ENCODE measurements at regions of chr12 and their contacts with region 1.

Region 1: GRCh38 chr12:120265473-120266179 is at the start of gene PXN:
- DNase-seq: peak; percentile 88
- ATAC-seq: peak; percentile 84
- H3K4me3 Mint-ChIP-seq: peak within 1 kb of the TSS; percentile 83
- H3K27ac Mint-ChIP-seq: peak within 1 kb of the TSS; percentile 85
- H3K4me1 Mint-ChIP-seq: peaks cover 49% of the 10 kb centered on the region
- H3K27me3 Mint-ChIP-seq: no peaks in the 10 kb centered on the region
- CTCF ChIP-seq: peak; percentile 78
- total RNA-seq, gene PXN: 96.6 to 132 TPM (median 99.2 TPM) in 3 replicates

Region 2: GRCh38 chr12:120199595-120200306 is 65.9 kb before region 1 on chr12:
- CTCF ChIA-PET with region 1: interaction called, 48 read pairs
- POLR2A ChIA-PET with region 1: interaction called, 19 read pairs
- DNase-seq: no peak
- ATAC-seq: no peak
- H3K4me3 Mint-ChIP-seq: peak overlapping the region; percentile 97
- H3K27ac Mint-ChIP-seq: peak overlapping the region; percentile 99
- H3K4me1 Mint-ChIP-seq: peaks cover 27% of the 10 kb centered on the region
- H3K27me3 Mint-ChIP-seq: no peaks in the 10 kb centered on the region
- CTCF ChIP-seq: no peak

Region 3: DNA sequence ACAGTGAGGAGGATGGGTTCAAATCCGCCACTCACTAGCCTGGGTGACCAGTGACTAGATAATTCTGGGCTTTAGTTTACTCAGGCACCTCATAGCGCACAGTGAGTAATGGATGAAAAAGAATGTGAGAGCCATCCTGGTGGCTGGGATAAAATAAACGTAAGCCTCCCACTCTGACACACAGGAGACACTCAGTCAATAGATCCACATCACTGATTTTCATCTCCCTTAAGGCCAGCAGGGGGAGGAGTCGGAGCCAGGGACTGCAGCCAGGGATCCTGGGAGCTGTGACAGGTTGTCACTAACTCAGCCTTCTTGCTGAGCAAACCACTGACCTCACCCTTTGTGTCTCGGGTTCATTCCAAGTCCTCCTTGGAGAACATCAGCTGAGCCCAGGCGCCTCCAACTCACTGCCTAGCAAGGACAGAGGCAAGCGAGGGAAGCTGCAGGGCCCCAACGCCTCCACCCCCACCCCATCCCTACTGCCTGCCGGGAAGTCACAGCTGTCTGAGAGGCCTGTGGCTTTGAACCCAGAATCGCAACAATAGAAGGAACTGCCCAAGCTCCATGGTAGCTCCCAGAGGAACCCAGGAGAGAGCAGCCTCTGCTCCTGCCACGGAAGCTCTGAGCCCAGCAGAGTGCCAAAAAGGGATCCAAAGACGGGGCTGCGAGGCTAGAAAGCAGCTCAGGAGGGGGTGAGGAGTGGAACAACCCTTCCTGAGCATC is 30.8 kb before region 1 on chr12:
- CTCF ChIA-PET with region 1: interaction called, 717 read pairs
- POLR2A ChIA-PET with region 1: interaction called, 198 read pairs
- DNase-seq: peak; percentile 36
- ATAC-seq: peak; percentile 2
- H3K4me3 Mint-ChIP-seq: no peak overlapping the region
- H3K27ac Mint-ChIP-seq: peak overlapping the region; percentile 80
- H3K4me1 Mint-ChIP-seq: peaks cover 73% of the 10 kb centered on the region
- H3K27me3 Mint-ChIP-seq: no peaks in the 10 kb centered on the region
- CTCF ChIP-seq: no peak

Region 4: DNA sequence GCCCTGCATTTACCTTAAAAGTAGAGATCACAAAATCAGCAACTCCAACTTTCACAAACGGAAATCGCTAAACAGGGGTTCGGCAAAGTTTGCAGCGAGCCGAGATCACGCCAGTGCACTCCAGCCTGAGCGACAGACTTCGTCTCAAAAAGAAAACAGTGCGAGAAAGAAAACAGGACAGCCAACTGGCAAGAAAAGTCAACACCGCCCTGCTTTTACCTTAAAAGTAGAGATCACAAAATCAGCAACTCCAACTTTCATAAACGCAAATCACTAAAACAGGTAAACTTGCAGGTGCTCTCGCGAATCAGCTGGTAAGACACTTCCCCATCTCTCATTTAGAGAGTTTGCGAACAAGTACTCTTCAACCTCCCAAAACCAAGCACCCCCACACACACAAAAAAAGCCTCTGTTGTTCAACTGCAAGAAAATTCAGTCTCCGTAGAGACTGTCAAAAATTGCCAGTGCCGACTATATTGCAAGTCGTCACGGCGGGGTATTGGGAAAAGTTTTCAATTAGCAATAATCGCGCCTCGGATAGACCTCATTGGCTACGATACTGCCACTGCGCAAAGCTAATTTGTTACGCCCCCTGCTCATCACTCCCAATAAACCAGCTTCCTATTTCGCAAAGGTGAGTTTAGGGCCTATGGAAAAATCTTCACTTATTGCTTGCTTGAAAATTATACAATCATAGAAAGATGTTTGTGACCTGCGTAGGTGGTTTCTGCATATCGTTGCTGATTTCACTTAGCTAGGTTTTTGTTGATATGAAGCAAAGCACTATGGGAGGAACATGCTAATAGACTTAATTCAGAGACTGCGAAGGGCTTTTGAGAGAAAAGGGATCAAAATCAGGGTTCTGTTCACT is 27.3 kb after region 1 on chr12 and contains the start of gene RNU4-1:
- CTCF ChIA-PET with region 1: interaction called, 29 read pairs
- POLR2A ChIA-PET with region 1: interaction called, 34 read pairs
- DNase-seq: peak; percentile 62
- ATAC-seq: peak; percentile 58
- H3K4me3 Mint-ChIP-seq: no peak within 1 kb of the TSS
- H3K27ac Mint-ChIP-seq: no peak within 1 kb of the TSS
- H3K4me1 Mint-ChIP-seq: peaks cover 9% of the 10 kb centered on the region
- H3K27me3 Mint-ChIP-seq: no peaks in the 10 kb centered on the region; the same call in 1 of the 2 replicates
- CTCF ChIP-seq: no peak
- total RNA-seq, gene RNU4-1: 2,196 to 2,477 TPM (median 2,436 TPM) in 3 replicates

Measured in WTC11 (cell line).